ENCODE measurements at regions of chr10 and their contacts with region 1.

Region 1: GRCh38 chr10:38094158-38094920 is at the start of gene ZNF37A:
- DNase-seq: peak; percentile 74 to 96 (median 87)
- ATAC-seq: peak; percentile 96
- H3K4me3 ChIP-seq: peak within 1 kb of the TSS; percentile 94
- H3K4me3 Mint-ChIP-seq: peak within 1 kb of the TSS; percentile 90
- H3K27ac ChIP-seq: peak within 1 kb of the TSS; percentile 70 to 76
- H3K27ac Mint-ChIP-seq: peak within 1 kb of the TSS; percentile 95
- H3K4me1 ChIP-seq: peaks cover 23% of the 10 kb centered on the region
- H3K4me1 Mint-ChIP-seq: peaks cover 40% of the 10 kb centered on the region
- H3K27me3 ChIP-seq: no peaks in the 10 kb centered on the region
- H3K27me3 Mint-ChIP-seq: no peaks in the 10 kb centered on the region
- CTCF ChIP-seq: no peak
- total RNA-seq, gene ZNF37A: 14.7 to 15.4 TPM

Region 2: GRCh38 chr10:37857287-37858211 is 236.8 kb before region 1 on chr10 and contains the start of gene ZNF248:
- CTCF ChIA-PET with region 1: no interaction called
- POLR2A ChIA-PET with region 1: no interaction called
- intact Hi-C with region 1: loop called (anchors 2 to 10 kb)
- DNase-seq: peak; percentile 88 to 99 (median 94)
- ATAC-seq: peak; percentile 94
- H3K4me3 ChIP-seq: peak within 1 kb of the TSS; percentile 98
- H3K4me3 Mint-ChIP-seq: peak within 1 kb of the TSS; percentile 97
- H3K27ac ChIP-seq: peak within 1 kb of the TSS; percentile 85 to 96
- H3K27ac Mint-ChIP-seq: peak within 1 kb of the TSS; percentile 96
- H3K4me1 ChIP-seq: peaks cover 15% of the 10 kb centered on the region
- H3K4me1 Mint-ChIP-seq: peaks cover 49% of the 10 kb centered on the region
- H3K27me3 ChIP-seq: no peaks in the 10 kb centered on the region
- H3K27me3 Mint-ChIP-seq: no peaks in the 10 kb centered on the region
- CTCF ChIP-seq: no peak
- total RNA-seq, gene ZNF248: 3.2 to 3.4 TPM

Region 3: GRCh38 chr10:37976091-37976879 is 118.1 kb before region 1 on chr10 and contains the start of gene ZNF25:
- CTCF ChIA-PET with region 1: interaction called, 31 read pairs
- POLR2A ChIA-PET with region 1: interaction called, 19 read pairs
- intact Hi-C with region 1: loop called (anchors 1 kb)
- DNase-seq: peak; percentile 95 to 99 (median 97)
- ATAC-seq: peak; percentile 89
- H3K4me3 ChIP-seq: peak within 1 kb of the TSS; percentile 73
- H3K4me3 Mint-ChIP-seq: peak within 1 kb of the TSS; percentile 93
- H3K27ac ChIP-seq: peak within 1 kb of the TSS; percentile 61 to 89
- H3K27ac Mint-ChIP-seq: peak within 1 kb of the TSS; percentile 96
- H3K4me1 ChIP-seq: peaks cover 12% of the 10 kb centered on the region
- H3K4me1 Mint-ChIP-seq: peaks cover 36% of the 10 kb centered on the region
- H3K27me3 ChIP-seq: no peaks in the 10 kb centered on the region
- H3K27me3 Mint-ChIP-seq: no peaks in the 10 kb centered on the region
- CTCF ChIP-seq: peak; percentile 95
- total RNA-seq, gene ZNF25: 4.6 to 5.4 TPM

Region 4: GRCh38 chr10:38010119-38010903 is 84.0 kb before region 1 on chr10 and contains the start of gene ZNF33A:
- CTCF ChIA-PET with region 1: interaction called, 6 read pairs
- POLR2A ChIA-PET with region 1: interaction called, 15 read pairs
- intact Hi-C with region 1: loop called (anchors 1 to 2 kb)
- DNase-seq: peak; percentile 83 to 97 (median 88)
- ATAC-seq: peak; percentile 82
- H3K4me3 ChIP-seq: peak within 1 kb of the TSS; percentile 57
- H3K4me3 Mint-ChIP-seq: peak within 1 kb of the TSS; percentile 93
- H3K27ac ChIP-seq: peak within 1 kb of the TSS; percentile 97 to 99
- H3K27ac Mint-ChIP-seq: peak within 1 kb of the TSS; percentile 99
- H3K4me1 ChIP-seq: peaks cover 32% of the 10 kb centered on the region
- H3K4me1 Mint-ChIP-seq: peaks cover 45% of the 10 kb centered on the region
- H3K27me3 ChIP-seq: no peaks in the 10 kb centered on the region
- H3K27me3 Mint-ChIP-seq: no peaks in the 10 kb centered on the region
- CTCF ChIP-seq: no peak
- total RNA-seq, gene ZNF33A: 25.9 to 30.3 TPM

Region 5: GRCh38 chr10:38043516-38043915 is 50.8 kb before region 1 on chr10:
- CTCF ChIA-PET with region 1: no interaction called
- POLR2A ChIA-PET with region 1: no interaction called
- intact Hi-C with region 1: loop called in 1 of 2 experiments (anchors 5 kb)
- DNase-seq: peak in 3 of 14 experiments; percentile 15 to 42 (median 29)
- ATAC-seq: peak; percentile 46
- H3K4me3 ChIP-seq: no peak overlapping the region
- H3K4me3 Mint-ChIP-seq: no peak overlapping the region
- H3K27ac ChIP-seq: no peak overlapping the region
- H3K27ac Mint-ChIP-seq: peak overlapping the region; percentile 80
- H3K4me1 ChIP-seq: peaks cover 10% of the 10 kb centered on the region
- H3K4me1 Mint-ChIP-seq: peaks cover 64% of the 10 kb centered on the region
- H3K27me3 ChIP-seq: no peaks in the 10 kb centered on the region
- H3K27me3 Mint-ChIP-seq: no peaks in the 10 kb centered on the region
- CTCF ChIP-seq: no peak

Region 6: GRCh38 chr10:38072552-38072951 is 21.8 kb before region 1 on chr10:
- CTCF ChIA-PET with region 1: no interaction called
- POLR2A ChIA-PET with region 1: no interaction called
- intact Hi-C with region 1: no loop called
- DNase-seq: no peak
- ATAC-seq: no peak
- H3K4me3 ChIP-seq: no peak overlapping the region
- H3K4me3 Mint-ChIP-seq: no peak overlapping the region
- H3K27ac ChIP-seq: no peak overlapping the region
- H3K27ac Mint-ChIP-seq: no peak overlapping the region
- H3K4me1 ChIP-seq: no peaks in the 10 kb centered on the region
- H3K4me1 Mint-ChIP-seq: no peaks in the 10 kb centered on the region
- H3K27me3 ChIP-seq: no peaks in the 10 kb centered on the region
- H3K27me3 Mint-ChIP-seq: peaks cover 4% of the 10 kb centered on the region
- CTCF ChIP-seq: no peak

Region 7: GRCh38 chr10:38127812-38128211 is 33.5 kb after region 1 on chr10:
- CTCF ChIA-PET with region 1: no interaction called
- POLR2A ChIA-PET with region 1: no interaction called
- intact Hi-C with region 1: no loop called
- DNase-seq: no peak
- ATAC-seq: no peak
- H3K4me3 ChIP-seq: no peak overlapping the region
- H3K4me3 Mint-ChIP-seq: no peak overlapping the region
- H3K27ac ChIP-seq: no peak overlapping the region
- H3K27ac Mint-ChIP-seq: no peak overlapping the region
- H3K4me1 ChIP-seq: no peaks in the 10 kb centered on the region
- H3K4me1 Mint-ChIP-seq: no peaks in the 10 kb centered on the region
- H3K27me3 ChIP-seq: no peaks in the 10 kb centered on the region
- H3K27me3 Mint-ChIP-seq: no peaks in the 10 kb centered on the region
- CTCF ChIP-seq: no peak